ENCODE measurements at regions of chr4 and their contacts with region 1.

Region 1: DNA sequence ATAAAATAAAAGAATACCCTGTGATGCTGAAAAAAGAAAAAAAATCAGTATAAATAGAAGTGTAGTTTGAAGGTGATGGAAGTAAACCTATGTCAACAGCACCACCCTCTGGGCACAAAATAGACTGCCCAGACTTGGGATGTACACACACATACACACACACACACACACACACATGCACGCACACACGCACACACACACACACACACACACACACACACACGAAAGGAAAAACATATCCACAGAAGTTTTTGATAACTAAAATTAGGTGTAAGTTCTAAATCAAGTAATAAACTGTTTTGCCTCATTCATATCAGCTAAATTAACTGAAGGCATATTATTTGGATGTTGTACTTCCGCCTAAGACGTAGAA is 40.5 kb downstream of the ANXA5 start:
- DNase-seq: peak; percentile 42 to 64 (median 47)
- ATAC-seq: peak; percentile 93
- H3K4me3 ChIP-seq: no peak overlapping the region
- H3K27ac ChIP-seq: no peak overlapping the region
- H3K4me1 ChIP-seq: no peaks in the 10 kb centered on the region; a peak in 1 of 5 replicates
- H3K27me3 ChIP-seq: no peaks in the 10 kb centered on the region
- CTCF ChIP-seq: peak; percentile 48 to 64 (median 64); a peak in 5 of 6 replicates
- EP300 ChIP-seq: no peak
- POLR2A ChIP-seq: no peak
- RAD21 ChIP-seq: peak; percentile 67 to 68

Region 2: DNA sequence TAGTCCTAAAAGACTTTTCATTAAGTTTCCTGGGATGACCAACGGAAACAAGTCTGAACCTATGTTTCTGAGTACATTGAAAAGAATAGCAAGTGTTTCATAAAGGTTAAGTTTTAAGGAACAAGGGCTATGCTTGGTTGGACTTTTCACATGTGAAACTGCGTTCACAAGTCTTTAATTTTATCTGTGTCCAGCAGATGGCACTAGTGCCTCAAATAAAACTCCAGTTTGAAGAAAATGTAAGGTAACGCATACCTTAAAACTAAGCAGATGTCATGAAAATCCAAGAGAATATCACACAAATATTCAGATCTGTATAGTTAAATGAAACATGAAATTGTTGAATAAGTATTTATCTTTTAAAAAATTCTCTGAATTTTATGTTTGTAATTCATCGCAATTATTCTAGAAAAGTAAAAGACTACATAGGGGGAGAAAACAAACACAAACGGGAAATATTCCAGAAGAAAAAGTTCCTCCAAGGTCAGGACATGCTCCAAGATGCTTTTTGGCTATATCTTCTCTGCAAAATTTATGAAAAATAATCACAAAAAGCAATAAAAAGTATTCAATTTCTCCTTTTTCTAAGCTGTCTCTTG is 1500.0 kb before region 1 on chr4:
- CTCF ChIA-PET with region 1: no interaction called
- POLR2A ChIA-PET with region 1: no interaction called
- in situ Hi-C with region 1: no loop called
- intact Hi-C with region 1: loop called (anchors 5 kb)
- DNase-seq: peak; percentile 9 to 70 (median 22)
- ATAC-seq: peak; percentile 72
- H3K4me3 ChIP-seq: no peak overlapping the region
- H3K27ac ChIP-seq: no peak overlapping the region
- H3K4me1 ChIP-seq: no peaks in the 10 kb centered on the region
- H3K27me3 ChIP-seq: no peaks in the 10 kb centered on the region
- CTCF ChIP-seq: peak in 2 of 3 experiments; percentile 41 to 68; a peak in 4 of 6 replicates
- EP300 ChIP-seq: no peak
- POLR2A ChIP-seq: no peak
- RAD21 ChIP-seq: peak; percentile 50 to 71

Region 3: GRCh38 chr4:121192480-121192879 is 463.8 kb before region 1 on chr4:
- CTCF ChIA-PET with region 1: interaction called, 3 read pairs
- POLR2A ChIA-PET with region 1: no interaction called
- in situ Hi-C with region 1: no loop called
- intact Hi-C with region 1: loop called (anchors 5 kb)
- DNase-seq: peak in 2 of 4 experiments; percentile 17 to 39
- ATAC-seq: peak; percentile 41; the same call in 1 of the 3 replicates
- H3K4me3 ChIP-seq: no peak overlapping the region
- H3K27ac ChIP-seq: no peak overlapping the region
- H3K4me1 ChIP-seq: no peaks in the 10 kb centered on the region
- H3K27me3 ChIP-seq: no peaks in the 10 kb centered on the region
- CTCF ChIP-seq: peak; percentile 46 to 72 (median 66); a peak in 5 of 6 replicates
- EP300 ChIP-seq: no peak
- POLR2A ChIP-seq: no peak
- RAD21 ChIP-seq: peak; percentile 37 to 51; a peak in 3 of 4 replicates

Region 4: GRCh38 chr4:121370729-121371325 is 285.4 kb before region 1 on chr4:
- CTCF ChIA-PET with region 1: no interaction called
- POLR2A ChIA-PET with region 1: no interaction called
- in situ Hi-C with region 1: no loop called
- intact Hi-C with region 1: loop called (anchors 5 kb)
- DNase-seq: peak; percentile 9 to 43 (median 16)
- ATAC-seq: peak; percentile 67
- H3K4me3 ChIP-seq: no peak overlapping the region
- H3K27ac ChIP-seq: no peak overlapping the region
- H3K4me1 ChIP-seq: no peaks in the 10 kb centered on the region
- H3K27me3 ChIP-seq: no peaks in the 10 kb centered on the region
- CTCF ChIP-seq: peak in 2 of 3 experiments; percentile 26 to 64; a peak in 3 of 6 replicates
- EP300 ChIP-seq: no peak
- POLR2A ChIP-seq: no peak
- RAD21 ChIP-seq: peak; percentile 43 to 53; a peak in 3 of 4 replicates

Region 5: GRCh38 chr4:121462660-121463261 is 193.5 kb before region 1 on chr4:
- CTCF ChIA-PET with region 1: interaction called, 3 read pairs
- POLR2A ChIA-PET with region 1: no interaction called
- in situ Hi-C with region 1: no loop called
- intact Hi-C with region 1: loop called (anchors 5 kb)
- DNase-seq: peak; percentile 14 to 54 (median 17)
- ATAC-seq: peak; percentile 82
- H3K4me3 ChIP-seq: no peak overlapping the region
- H3K27ac ChIP-seq: no peak overlapping the region
- H3K4me1 ChIP-seq: no peaks in the 10 kb centered on the region
- H3K27me3 ChIP-seq: no peaks in the 10 kb centered on the region
- CTCF ChIP-seq: peak; percentile 39 to 59 (median 56); a peak in 5 of 6 replicates
- EP300 ChIP-seq: no peak
- POLR2A ChIP-seq: no peak
- RAD21 ChIP-seq: peak in 1 of 2 experiments; percentile 43; a peak in 3 of 4 replicates

Region 6: GRCh38 chr4:121484633-121485032 is 171.6 kb before region 1 on chr4:
- CTCF ChIA-PET with region 1: no interaction called
- POLR2A ChIA-PET with region 1: no interaction called
- in situ Hi-C with region 1: no loop called
- intact Hi-C with region 1: loop called (anchors 1 kb)
- DNase-seq: peak; percentile 15 to 36 (median 18)
- ATAC-seq: peak; percentile 94
- H3K4me3 ChIP-seq: no peak overlapping the region
- H3K27ac ChIP-seq: no peak overlapping the region
- H3K4me1 ChIP-seq: no peaks in the 10 kb centered on the region
- H3K27me3 ChIP-seq: no peaks in the 10 kb centered on the region
- CTCF ChIP-seq: peak; percentile 60 to 69 (median 64)
- EP300 ChIP-seq: no peak
- POLR2A ChIP-seq: no peak
- RAD21 ChIP-seq: peak; percentile 25 to 39

Region 7: GRCh38 chr4:121726642-121727268 is 70.5 kb after region 1 on chr4:
- CTCF ChIA-PET with region 1: no interaction called
- POLR2A ChIA-PET with region 1: no interaction called
- in situ Hi-C with region 1: no loop called
- intact Hi-C with region 1: loop called (anchors 5 kb)
- DNase-seq: peak; percentile 47 to 64 (median 52)
- ATAC-seq: peak; percentile 92
- H3K4me3 ChIP-seq: no peak overlapping the region
- H3K27ac ChIP-seq: no peak overlapping the region
- H3K4me1 ChIP-seq: no peaks in the 10 kb centered on the region
- H3K27me3 ChIP-seq: peaks cover 10 to 11% of the 10 kb centered on the region in 2 experiments; a peak in 3 of 5 replicates
- CTCF ChIP-seq: peak; percentile 58 to 80 (median 67)
- EP300 ChIP-seq: no peak
- POLR2A ChIP-seq: no peak
- RAD21 ChIP-seq: peak; percentile 78 to 86

Region 8: GRCh38 chr4:121908346-121908745 is 252.1 kb after region 1 on chr4:
- CTCF ChIA-PET with region 1: no interaction called
- POLR2A ChIA-PET with region 1: no interaction called
- in situ Hi-C with region 1: no loop called
- intact Hi-C with region 1: no loop called
- DNase-seq: no peak
- ATAC-seq: no peak
- H3K4me3 ChIP-seq: no peak overlapping the region
- H3K27ac ChIP-seq: no peak overlapping the region
- H3K4me1 ChIP-seq: no peaks in the 10 kb centered on the region
- H3K27me3 ChIP-seq: no peaks in the 10 kb centered on the region; a peak in 2 of 5 replicates
- CTCF ChIP-seq: no peak
- EP300 ChIP-seq: no peak
- POLR2A ChIP-seq: no peak
- RAD21 ChIP-seq: no peak